Aorta (tissue), 5 donors: ENCODE measurements at regions of chr2 and their contacts with region 1.

Region 1: DNA sequence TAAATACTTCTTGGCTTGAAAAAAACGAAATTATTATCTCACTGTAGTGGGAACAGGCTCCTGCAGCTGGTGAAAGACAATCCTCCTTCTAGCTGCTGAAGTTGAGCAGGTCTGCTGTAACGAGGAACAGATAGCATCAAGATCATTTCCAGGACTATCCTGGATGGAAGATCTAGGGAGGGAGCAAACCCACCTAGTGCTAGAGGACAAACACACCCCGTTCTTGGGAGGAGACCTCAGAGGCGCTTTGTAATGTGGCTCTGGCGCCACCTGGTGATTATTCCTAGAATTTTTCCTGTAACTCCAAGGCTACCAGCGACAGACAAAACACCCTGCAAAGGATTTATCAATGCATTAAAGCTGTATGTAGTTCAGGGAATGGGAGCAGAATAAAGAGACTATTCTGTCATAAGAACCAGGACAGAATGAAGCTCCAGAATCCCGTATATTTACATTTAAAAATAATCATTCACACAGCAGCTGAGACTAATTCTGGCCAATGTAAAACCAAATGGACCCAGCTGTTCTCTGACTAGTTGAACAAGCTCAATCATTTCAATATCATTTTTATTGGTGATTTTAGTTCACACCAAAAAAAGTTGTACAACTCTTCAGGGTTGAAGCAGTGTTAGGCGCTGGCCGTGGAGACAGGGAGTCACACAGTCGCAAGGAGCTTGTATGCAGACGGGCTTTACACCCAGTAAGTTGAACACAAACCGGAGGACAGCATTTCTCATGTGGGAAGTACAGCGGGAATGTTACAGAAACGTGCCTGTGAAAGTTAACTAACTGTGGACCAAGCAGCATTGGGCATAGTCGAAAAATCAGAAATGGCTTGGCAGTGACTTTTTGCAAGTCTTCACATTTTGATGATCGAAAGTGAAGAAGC is 290.3 kb downstream of the TRIB2 start:
- DNase-seq: peak; percentile 55 to 77
- ATAC-seq: peak; percentile 87
- H3K4me3 ChIP-seq: no peak overlapping the region
- H3K27ac ChIP-seq: no peak overlapping the region
- H3K4me1 ChIP-seq: no peaks in the 10 kb centered on the region
- H3K27me3 ChIP-seq: no peaks in the 10 kb centered on the region

Region 2: DNA sequence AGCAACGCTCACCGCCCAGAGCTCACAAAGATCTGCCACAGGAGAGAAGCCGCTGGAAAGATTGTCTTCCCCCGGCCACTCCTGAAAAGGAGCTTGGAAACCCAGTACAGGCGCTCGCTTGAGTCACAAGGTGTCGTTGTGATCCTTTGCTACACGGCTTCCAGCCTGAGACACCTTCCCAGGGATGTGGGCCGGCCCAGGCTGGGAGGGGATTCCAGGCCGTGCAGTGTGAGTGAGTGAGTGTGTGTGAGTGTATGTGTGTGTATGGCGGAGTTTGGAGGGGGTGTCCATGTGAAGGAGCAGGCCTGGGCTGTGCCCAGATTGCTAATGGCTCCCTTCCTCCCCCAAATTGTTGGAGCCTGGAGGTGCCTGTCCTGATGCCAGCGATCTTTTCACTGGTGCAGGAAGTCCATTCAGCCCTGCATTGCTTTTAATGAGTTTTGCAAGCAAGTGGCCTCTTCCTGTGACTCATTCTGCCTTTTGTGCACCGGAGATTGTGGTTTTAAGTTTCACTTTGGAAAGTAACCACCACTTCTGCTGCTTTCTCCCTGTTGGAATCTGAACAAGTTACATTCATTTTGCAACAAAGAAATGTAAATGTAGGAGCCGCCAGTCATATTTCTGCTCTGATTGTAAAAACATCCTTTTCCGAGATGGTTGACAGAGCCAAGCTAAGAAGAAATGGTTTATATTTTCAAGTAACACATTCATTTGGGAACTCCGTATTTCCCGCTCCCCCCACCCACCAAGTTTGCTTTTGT is 1176.9 kb before region 1 on chr2:
- intact Hi-C with region 1: loop called (anchors 5 kb)
- DNase-seq: peak; percentile 79 to 82
- ATAC-seq: peak; percentile 85
- H3K4me3 ChIP-seq: peak overlapping the region; percentile 25 to 65
- H3K27ac ChIP-seq: peak overlapping the region in 1 of 2 donors; percentile 91
- H3K4me1 ChIP-seq: no peaks in the 10 kb centered on the region
- H3K27me3 ChIP-seq: no peaks in the 10 kb centered on the region